ENCODE measurements at regions of chr1 and their contacts with region 1.

Region 1: GRCh38 chr1:205141236-205142101 is 19.7 kb upstream of the RBBP5 start:
- DNase-seq: peak; percentile 71
- ATAC-seq: peak; percentile 93
- H3K4me3 ChIP-seq: no peak overlapping the region
- H3K27ac ChIP-seq: no peak overlapping the region
- H3K4me1 ChIP-seq: peaks cover 2 to 7% of the 10 kb centered on the region in 2 experiments; a peak in 3 of 4 replicates
- H3K27me3 ChIP-seq: no peaks in the 10 kb centered on the region
- CTCF ChIP-seq: peak; percentile 47 to 88 (median 80); a peak in 5 of 6 replicates
- POLR2A ChIP-seq: no peak
- RAD21 ChIP-seq: peak; percentile 59

Region 2: DNA sequence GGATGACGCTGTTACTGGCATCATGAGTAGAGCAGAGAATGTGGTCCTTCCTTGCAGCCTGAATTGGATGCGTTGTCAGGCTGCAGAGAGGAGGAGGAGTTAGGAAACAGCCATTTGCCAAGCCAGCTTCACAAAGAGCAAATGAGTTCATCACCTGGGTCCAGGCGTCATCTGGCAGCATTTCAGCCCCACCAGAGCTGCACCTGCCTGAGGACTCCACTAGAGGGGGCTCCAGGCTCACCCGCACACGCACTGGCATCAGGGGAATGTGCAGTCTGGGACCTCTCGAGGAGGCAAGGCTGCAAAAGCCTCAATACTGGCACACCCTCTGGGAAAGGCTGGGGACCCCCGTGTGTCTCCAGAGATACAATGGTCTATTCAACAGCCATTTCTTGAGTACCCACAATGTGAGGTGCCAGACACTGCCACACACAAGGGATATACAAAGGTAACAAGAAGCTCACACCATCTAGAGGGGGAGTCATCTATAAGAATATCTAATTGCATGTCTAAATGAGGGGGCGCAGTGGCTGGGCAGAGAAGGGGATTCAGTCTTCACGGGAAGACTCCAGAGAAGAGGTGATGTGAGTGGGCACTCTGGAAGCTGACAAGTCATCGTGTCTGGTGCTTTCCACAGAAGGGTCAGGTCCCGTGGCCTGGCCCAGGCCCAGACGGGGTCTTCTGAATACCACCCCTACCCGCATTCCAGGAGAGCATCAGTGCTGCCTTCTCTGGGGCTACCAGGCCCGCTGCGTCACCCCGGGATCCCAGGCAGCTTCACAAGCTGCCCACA is 152.0 kb before region 1 on chr1:
- CTCF ChIA-PET with region 1: interaction called, 17 read pairs
- POLR2A ChIA-PET with region 1: no interaction called
- RAD21 ChIA-PET with region 1: interaction called, 5 read pairs
- intact Hi-C with region 1: loop called (anchors 1 kb)
- DNase-seq: peak; percentile 45
- ATAC-seq: peak; percentile 98
- H3K4me3 ChIP-seq: no peak overlapping the region
- H3K27ac ChIP-seq: no peak overlapping the region
- H3K4me1 ChIP-seq: no peaks in the 10 kb centered on the region
- H3K27me3 ChIP-seq: peaks cover 16% of the 10 kb centered on the region; the same call in 1 of the 2 replicates
- CTCF ChIP-seq: peak; percentile 96 to 99 (median 99)
- POLR2A ChIP-seq: no peak
- RAD21 ChIP-seq: peak; percentile 98

Region 3: DNA sequence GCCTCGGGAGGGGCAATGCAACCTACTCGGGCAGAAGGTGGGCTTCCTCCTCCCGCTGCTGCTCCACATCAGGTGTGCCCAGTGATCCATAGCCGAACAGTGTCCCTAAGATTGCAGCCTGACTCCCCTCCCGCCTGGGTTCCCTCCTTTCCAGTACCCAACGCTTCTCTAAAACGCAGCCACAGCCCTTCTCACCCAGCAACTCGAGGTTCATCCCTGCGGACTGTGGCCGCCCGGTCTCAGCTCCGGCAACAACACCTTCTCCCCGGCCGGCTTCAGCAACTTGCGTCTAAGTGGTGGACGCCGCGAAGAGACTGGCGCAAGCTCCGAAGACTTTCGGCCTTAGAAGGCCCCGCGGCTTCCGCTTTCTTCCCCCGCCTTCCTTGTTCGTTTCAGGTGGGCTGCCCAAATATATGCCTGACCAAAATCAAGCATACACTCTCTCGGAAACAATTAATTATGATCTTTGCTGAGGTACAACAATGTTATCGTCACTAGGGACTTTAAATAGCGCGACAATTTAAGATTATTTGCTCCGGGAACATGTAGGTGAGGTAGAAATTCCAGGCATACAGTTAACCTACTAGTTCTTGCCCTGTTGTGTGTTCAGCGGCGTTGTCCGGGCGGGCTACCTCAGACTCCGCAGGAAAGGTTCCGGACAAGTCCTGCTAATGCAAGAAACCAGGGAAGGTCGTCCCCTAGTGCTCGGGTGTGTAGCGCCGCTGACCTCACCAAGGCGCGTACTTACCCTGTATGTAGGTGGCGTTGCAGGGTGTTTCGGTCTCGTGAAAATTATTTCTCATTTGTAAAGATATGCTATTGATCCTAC is 19.6 kb before region 1 on chr1 and contains the start of gene RBBP5:
- CTCF ChIA-PET with region 1: interaction called, 10 read pairs
- POLR2A ChIA-PET with region 1: interaction called, 3 read pairs
- RAD21 ChIA-PET with region 1: no interaction called
- intact Hi-C with region 1: loop called (anchors 1 kb)
- DNase-seq: peak; percentile 97
- ATAC-seq: peak; percentile 99
- H3K4me3 ChIP-seq: peak within 1 kb of the TSS; percentile 90 to 98
- H3K27ac ChIP-seq: peak within 1 kb of the TSS; percentile 70
- H3K4me1 ChIP-seq: peaks cover 7 to 22% of the 10 kb centered on the region in 2 experiments; a peak in 3 of 4 replicates
- H3K27me3 ChIP-seq: no peaks in the 10 kb centered on the region
- CTCF ChIP-seq: peak; percentile 72 to 96 (median 72)
- POLR2A ChIP-seq: peak; percentile 84
- RAD21 ChIP-seq: peak; percentile 48
- total RNA-seq, gene RBBP5: 24.5 TPM

Region 4: DNA sequence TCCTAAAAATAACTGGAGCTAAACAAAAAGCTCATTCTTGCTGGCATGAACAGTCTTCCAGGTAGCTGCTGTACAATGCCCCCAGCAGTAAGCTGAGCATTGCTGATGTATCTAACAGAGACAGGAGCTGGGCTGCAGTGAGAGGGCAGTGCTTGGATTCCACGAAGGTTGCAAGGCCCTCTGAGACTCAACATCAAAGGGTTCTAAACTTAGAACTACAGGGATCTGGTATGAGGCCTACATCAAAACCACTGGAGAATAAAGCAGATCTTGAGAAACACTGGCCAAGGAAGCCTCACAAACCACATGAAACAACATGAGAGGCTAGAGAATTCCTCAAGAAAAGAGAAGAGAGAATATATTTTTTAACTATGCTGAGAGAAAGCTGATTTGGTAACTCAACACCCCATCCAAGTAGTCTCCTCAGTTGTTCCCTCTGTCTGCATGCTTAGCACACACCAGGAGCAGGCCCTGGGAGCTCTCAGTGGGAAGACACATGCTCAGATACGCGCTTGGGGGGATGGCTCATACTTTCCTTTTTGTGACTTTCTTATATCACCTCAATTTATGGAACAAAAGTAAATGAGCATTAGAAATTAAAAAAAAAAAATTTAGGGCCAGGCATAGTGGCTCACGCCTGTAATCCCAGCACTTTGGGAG is 42.3 kb after region 1 on chr1:
- CTCF ChIA-PET with region 1: no interaction called
- POLR2A ChIA-PET with region 1: no interaction called
- RAD21 ChIA-PET with region 1: no interaction called
- intact Hi-C with region 1: no loop called
- DNase-seq: no peak
- ATAC-seq: peak; percentile 32; the same call in 1 of the 2 replicates
- H3K4me3 ChIP-seq: no peak overlapping the region
- H3K27ac ChIP-seq: no peak overlapping the region
- H3K4me1 ChIP-seq: peaks cover 5 to 9% of the 10 kb centered on the region in 2 experiments; a peak in 3 of 4 replicates
- H3K27me3 ChIP-seq: no peaks in the 10 kb centered on the region
- CTCF ChIP-seq: no peak
- POLR2A ChIP-seq: no peak
- RAD21 ChIP-seq: no peak

Measured in HCT116 (cell line).